Natural killer cell (primary cell): ENCODE measurements at regions of chr20 and their contacts with region 1.

Region 1: DNA sequence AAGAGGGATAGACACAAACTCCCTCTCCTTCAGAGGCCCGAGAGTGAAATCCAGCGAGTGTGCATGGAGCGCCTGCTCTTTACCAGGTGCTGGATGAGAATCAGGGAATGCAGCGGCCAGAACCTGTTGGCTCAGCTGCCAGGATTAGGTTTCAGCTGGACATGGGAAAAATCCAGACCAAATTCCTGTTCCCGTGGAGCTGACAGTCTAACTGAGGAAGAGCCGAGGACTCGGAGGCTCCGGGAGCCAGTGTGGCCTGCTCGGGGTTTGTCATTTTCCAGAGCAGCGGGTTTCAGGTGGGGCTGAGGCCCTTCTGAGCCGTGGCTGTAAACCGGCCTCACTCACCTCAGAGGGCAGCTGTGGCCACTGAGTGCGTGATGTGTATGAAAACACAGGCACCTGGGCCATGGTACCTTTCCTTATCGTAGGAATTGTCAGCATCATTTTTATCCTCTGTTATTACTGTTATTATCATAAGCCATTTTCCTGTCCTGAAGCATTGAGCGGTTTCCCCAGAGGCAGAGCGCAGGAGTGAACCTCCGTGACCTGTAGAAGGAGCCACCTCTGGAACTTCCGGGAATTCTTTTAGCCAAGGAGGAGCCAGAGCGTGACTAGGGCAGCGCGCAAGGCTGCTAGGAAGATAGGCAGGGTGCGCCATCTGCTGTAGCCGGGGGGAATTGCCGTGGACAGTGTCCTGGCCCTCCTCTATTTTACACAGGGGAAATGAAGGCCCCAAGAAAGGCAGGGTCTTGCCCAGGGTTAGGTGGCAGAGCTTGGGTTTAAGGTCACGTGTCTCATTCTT is 27.3 kb downstream of the PKIG start:
- DNase-seq: peak; percentile 88 to 92
- ATAC-seq: peak; percentile 78 to 92 (median 84)
- H3K4me3 ChIP-seq: no peak overlapping the region
- H3K4me3 Mint-ChIP-seq: peak overlapping the region; percentile 89
- H3K27ac ChIP-seq: peak overlapping the region; percentile 94
- H3K27ac Mint-ChIP-seq: peak overlapping the region; percentile 98 to 99
- H3K4me1 ChIP-seq: peaks cover 31% of the 10 kb centered on the region
- H3K4me1 Mint-ChIP-seq: peaks cover 22 to 32% of the 10 kb centered on the region in 2 donors
- H3K27me3 ChIP-seq: no peaks in the 10 kb centered on the region
- H3K27me3 Mint-ChIP-seq: no peaks in the 10 kb centered on the region
- CTCF ChIP-seq: peak; percentile 96

Region 2: GRCh38 chr20:44217342-44218092 is 392.2 kb before region 1 on chr20:
- intact Hi-C with region 1: loop called (anchors 5 kb)
- DNase-seq: peak; percentile 53 to 90
- ATAC-seq: peak; percentile 65 to 73 (median 70)
- H3K4me3 ChIP-seq: peak overlapping the region; percentile 2
- H3K4me3 Mint-ChIP-seq: peak overlapping the region; percentile 92
- H3K27ac ChIP-seq: peak overlapping the region; percentile 52
- H3K27ac Mint-ChIP-seq: peak overlapping the region; percentile 37 to 68
- H3K4me1 ChIP-seq: peaks cover 31% of the 10 kb centered on the region
- H3K4me1 Mint-ChIP-seq: peaks cover 49 to 54% of the 10 kb centered on the region in 2 donors
- H3K27me3 ChIP-seq: no peaks in the 10 kb centered on the region
- H3K27me3 Mint-ChIP-seq: no peaks in the 10 kb centered on the region
- CTCF ChIP-seq: peak; percentile 98

Region 3: DNA sequence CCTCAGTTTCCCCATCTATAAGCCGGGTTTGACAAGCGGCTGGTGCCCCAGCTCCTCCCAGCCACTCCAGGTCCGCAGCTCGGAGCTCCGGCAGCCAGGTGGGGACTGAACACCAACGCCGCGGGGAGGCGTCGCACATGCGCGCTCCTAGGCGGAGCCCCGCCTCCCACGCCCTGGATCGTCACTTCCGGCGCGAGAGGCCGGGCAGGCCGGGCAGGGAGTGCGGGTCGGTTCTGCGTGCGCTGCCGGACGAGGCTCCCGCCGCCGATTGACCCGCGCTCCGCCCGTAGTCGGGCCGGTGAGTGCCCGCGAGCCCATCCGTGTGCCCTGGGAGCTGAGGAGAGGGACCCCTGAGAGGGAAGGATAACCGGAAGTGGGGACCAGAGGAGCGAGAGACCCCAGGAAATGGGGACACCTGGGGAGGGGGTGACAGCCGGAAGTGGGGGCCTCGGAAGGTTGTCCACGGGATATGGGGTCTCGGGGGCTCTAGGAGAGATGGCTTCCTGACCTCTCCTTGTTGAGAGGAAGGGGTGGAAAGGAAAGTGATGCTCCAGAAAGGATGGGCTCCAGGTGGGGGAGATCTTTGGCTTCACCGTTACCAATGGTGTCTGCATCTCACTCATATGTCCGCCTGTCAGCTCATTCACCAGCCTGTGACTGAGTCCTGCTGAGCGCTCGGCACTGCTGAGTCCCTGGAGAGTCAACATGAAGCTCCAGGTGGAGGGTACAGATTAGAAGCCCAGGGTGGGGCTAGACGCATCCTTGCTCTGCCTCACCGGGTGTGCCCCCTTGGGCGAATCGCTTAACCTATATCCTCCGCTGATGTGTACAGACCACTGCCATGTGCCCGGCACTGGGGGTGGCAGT is 133.8 kb before region 1 on chr20 and contains the start of gene TTPAL:
- intact Hi-C with region 1: loop called (anchors 1 kb)
- DNase-seq: peak; percentile 89 to 96
- ATAC-seq: peak; percentile 98 to 99 (median 98)
- H3K4me3 ChIP-seq: peak within 1 kb of the TSS; percentile 94
- H3K4me3 Mint-ChIP-seq: peak within 1 kb of the TSS; percentile 95
- H3K27ac ChIP-seq: peak within 1 kb of the TSS; percentile 97
- H3K27ac Mint-ChIP-seq: peak within 1 kb of the TSS; percentile 93 to 99
- H3K4me1 ChIP-seq: peaks cover 15% of the 10 kb centered on the region
- H3K4me1 Mint-ChIP-seq: peaks cover 26 to 38% of the 10 kb centered on the region in 2 donors
- H3K27me3 ChIP-seq: no peaks in the 10 kb centered on the region
- H3K27me3 Mint-ChIP-seq: no peaks in the 10 kb centered on the region
- CTCF ChIP-seq: peak; percentile 31
- total RNA-seq, gene TTPAL: 17.2 to 22.9 (median 22.5) TPM

Region 4: GRCh38 chr20:44532259-44532980 is 77.3 kb before region 1 on chr20:
- intact Hi-C with region 1: loop called (anchors 2 kb)
- DNase-seq: no peak
- ATAC-seq: peak in 1 of 3 donors; percentile 11
- H3K4me3 ChIP-seq: peak overlapping the region; percentile 59
- H3K4me3 Mint-ChIP-seq: no peak overlapping the region
- H3K27ac ChIP-seq: no peak overlapping the region
- H3K27ac Mint-ChIP-seq: no peak overlapping the region
- H3K4me1 ChIP-seq: peaks cover 16% of the 10 kb centered on the region
- H3K4me1 Mint-ChIP-seq: no peaks in the 10 kb centered on the region
- H3K27me3 ChIP-seq: no peaks in the 10 kb centered on the region
- H3K27me3 Mint-ChIP-seq: peaks cover 4 to 6% of the 10 kb centered on the region in 2 donors
- CTCF ChIP-seq: no peak

Region 5: DNA sequence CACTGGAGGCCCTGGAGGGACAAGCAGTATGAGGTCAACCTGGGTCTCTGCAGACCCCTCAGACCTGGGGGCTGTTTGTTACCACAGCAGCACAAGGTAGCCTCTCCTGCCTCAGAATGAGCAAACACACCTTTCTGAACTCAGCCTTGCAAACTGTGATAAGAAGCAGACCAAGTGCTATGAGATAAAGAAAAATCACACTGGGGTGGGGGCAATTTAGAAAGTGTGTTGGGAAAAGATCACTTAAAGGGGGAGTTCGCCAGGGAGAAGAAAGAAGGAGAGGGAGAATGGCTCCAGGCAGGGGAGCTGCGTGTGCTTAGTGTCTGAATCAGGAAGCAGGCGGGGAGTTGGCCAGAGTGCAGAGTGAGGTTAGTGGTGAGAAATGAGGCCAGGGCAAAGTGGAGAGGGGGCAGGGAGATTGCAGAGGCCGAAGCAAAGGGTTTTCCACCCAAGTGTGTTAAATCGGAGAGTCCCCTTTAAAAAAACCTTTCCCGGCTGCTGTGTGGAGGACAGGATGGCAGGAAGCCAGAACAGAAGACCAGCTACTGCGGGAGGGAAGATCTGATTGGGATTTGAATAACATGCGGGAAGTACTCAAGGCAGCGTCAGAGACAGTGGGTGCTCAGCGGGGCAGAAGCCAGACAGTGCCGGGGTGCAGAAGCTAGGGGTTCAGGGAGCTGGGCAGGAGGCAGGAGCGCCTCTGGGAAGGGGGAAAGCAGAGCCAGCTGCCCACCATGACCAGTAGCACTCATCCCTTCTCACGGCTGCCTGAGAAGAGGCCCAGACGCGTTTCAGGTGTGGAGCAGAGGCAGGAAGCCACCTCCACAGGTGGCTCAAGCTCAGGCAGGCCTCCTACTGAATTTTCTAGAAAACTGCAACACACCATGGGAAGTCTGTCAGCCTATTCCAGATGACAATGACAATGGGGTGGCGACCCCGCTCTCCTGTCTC is 32.8 kb after region 1 on chr20:
- intact Hi-C with region 1: loop called (anchors 1 kb)
- DNase-seq: peak; percentile 57 to 67
- ATAC-seq: peak; percentile 49 to 69 (median 66)
- H3K4me3 ChIP-seq: peak overlapping the region; percentile 5
- H3K4me3 Mint-ChIP-seq: peak overlapping the region; percentile 83
- H3K27ac ChIP-seq: peak overlapping the region; percentile 96
- H3K27ac Mint-ChIP-seq: peak overlapping the region; percentile 89 to 92
- H3K4me1 ChIP-seq: peaks cover 81% of the 10 kb centered on the region
- H3K4me1 Mint-ChIP-seq: peaks cover 77 to 86% of the 10 kb centered on the region in 2 donors
- H3K27me3 ChIP-seq: no peaks in the 10 kb centered on the region
- H3K27me3 Mint-ChIP-seq: no peaks in the 10 kb centered on the region
- CTCF ChIP-seq: no peak